ENCODE measurements at regions of chr14 and their contacts with region 1.

Region 1: DNA sequence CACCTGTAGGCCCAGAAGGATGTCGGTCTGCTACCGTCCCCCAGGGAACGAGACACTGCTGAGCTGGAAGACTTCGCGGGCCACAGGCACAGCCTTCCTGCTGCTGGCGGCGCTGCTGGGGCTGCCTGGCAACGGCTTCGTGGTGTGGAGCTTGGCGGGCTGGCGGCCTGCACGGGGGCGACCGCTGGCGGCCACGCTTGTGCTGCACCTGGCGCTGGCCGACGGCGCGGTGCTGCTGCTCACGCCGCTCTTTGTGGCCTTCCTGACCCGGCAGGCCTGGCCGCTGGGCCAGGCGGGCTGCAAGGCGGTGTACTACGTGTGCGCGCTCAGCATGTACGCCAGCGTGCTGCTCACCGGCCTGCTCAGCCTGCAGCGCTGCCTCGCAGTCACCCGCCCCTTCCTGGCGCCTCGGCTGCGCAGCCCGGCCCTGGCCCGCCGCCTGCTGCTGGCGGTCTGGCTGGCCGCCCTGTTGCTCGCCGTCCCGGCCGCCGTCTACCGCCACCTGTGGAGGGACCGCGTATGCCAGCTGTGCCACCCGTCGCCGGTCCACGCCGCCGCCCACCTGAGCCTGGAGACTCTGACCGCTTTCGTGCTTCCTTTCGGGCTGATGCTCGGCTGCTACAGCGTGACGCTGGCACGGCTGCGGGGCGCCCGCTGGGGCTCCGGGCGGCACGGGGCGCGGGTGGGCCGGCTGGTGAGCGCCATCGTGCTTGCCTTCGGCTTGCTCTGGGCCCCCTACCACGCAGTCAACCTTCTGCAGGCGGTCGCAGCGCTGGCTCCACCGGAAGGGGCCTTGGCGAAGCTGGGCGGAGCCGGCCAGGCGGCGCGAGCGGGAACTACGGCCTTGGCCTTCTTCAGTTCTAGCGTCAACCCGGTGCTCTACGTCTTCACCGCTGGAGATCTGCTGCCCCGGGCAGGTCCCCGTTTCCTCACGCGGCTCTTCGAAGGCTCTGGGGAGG is at the start of gene LTB4R:
- DNase-seq: peak; percentile 65
- CTCF ChIP-seq: peak; percentile 58

Region 2: DNA sequence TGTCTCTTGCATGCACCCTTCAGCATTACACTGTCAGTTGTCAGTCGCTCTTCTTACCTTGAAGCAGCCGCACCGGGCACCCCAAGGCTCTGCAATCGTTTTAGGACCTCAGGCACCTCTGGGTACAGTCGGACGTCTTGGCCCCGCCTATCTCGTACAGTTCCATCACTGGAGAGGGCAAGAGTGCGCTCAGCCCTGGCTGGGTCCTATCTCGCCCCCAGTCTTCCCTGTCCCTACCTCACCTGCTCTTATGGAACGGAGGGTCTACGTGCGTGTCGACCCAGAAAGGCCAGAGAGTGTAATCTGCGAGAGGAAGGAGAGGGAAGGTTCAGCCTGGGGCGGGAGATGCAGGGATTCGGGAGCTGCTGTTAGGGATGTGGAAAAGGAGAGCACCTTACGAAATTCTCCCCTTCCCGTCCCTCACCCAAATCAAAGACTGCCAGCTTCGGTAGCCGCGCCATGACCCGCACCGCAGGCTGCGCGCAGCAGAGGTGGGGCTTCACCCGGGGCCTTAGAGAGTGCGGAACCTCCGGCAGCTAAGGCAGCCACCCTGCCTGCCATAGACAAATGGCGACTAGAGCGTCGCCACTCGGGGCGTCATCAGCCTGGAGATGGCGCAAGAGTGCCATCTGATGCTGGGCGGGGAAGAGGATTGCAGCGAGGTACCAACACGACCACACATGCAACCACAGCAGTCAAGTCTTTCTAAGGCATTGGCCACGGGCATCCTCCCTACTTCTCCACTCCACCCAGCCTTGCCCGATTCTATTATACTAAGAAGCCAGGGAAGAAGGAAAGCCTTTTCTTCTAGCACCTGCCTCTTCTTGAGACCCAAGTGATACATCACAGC is 95.2 kb before region 1 on chr14 and contains the start of gene MDP1:
- CTCF ChIA-PET with region 1: interaction called, 42 read pairs
- POLR2A ChIA-PET with region 1: no interaction called
- DNase-seq: peak; percentile 91
- CTCF ChIP-seq: peak; percentile 97

Region 3: DNA sequence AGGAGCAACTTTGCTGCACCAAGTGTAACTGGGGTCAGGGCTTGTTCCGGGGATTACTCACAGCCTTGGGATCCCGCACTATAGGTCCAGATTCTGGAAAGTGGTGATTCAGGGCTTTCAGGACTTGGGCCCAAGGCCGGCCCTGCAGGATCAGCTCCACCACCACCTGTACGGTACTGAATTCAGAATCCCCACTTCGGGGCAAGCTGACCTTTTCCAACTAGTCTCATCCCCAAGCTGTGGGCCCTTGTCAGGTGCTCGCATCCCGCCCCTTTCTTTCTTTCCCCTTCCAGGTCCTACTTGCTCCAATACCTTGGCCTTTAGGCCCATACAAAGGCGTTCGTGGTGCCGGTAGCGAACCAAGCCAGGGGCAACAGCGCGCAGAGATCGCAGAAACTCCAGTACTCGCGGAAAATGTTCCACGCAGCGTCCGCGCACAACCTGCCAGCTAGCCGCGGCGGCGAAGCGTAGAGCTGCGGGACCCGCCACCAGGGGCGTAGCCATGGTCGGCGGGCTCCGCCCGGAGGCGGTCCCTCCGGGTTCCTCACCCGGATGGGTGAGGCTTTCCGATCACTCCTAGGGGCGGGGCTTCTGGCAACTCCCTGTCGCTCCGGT is 69.0 kb before region 1 on chr14:
- CTCF ChIA-PET with region 1: interaction called, 155 read pairs
- POLR2A ChIA-PET with region 1: interaction called, 5 read pairs
- DNase-seq: peak; percentile 97
- CTCF ChIP-seq: peak; percentile 11

Region 4: DNA sequence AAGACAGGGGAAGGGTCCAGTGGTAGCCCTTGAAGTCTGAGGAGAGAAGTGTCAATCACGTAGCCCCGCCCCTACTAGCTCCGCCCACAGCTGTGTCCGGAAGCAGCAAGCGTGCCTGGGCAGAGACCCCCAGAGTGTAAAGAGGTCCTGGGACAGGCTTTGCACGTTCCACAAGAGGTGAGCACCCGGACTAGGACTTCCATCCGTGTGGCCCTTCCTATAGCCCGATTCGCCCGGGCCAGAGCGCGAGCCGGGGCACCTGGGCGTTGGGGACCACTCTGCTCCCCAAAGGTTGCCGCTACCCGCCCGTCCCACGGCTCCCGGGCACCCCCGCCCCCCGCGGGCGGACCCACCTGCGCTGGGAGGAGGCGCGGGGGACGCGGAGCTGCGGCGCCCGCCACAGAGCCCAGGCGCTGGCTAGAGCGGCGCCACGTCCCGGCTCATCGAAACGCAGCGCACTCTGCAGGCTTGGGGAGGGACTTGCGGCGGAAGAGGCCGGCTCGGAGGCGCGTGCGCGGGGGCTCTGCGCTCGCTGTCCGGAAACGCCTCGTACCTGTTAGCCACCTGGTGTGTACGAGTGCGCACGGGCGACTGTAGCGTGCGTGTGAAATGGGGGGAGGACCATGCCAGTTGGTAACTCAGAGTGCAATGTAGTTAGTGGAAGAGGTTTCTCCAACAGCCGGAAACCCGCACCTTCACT is 39.6 kb before region 1 on chr14 and contains the start of gene RABGGTA:
- CTCF ChIA-PET with region 1: interaction called, 67 read pairs
- POLR2A ChIA-PET with region 1: no interaction called
- DNase-seq: peak; percentile 96
- CTCF ChIP-seq: peak; percentile 88

Region 5: DNA sequence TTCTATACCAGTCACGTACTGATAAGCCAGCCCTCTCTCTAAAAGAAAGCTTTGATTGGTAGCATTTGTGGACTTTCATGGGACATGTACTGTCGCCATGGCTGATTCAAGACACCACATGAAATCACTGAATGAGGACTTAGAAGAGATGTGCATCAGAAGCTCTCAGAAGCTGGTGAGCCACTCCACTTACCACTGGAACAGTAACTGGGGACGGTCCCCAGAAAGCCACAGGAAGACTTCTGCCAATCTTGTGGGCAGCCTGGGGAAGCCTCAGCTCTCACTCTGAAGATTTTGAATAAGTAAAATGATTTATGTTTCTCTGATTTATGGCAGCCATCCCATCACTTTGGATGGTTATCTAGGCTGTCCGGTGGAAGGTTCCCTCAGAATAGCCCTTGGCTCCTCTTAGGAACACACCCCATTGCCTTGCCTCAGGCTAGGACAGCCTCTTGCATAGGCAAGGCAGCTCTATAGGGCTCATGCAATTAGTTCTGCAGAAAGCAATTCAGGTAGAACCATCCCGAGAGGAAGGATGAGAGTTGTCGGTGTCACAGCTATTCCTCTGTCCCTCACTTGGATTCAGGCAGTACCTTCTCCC is 21.2 kb before region 1 on chr14:
- CTCF ChIA-PET with region 1: interaction called, 151 read pairs
- POLR2A ChIA-PET with region 1: no interaction called
- DNase-seq: peak; percentile 58
- CTCF ChIP-seq: no peak

Region 6: GRCh38 chr14:24321212-24321975 is 10.5 kb after region 1 on chr14:
- CTCF ChIA-PET with region 1: interaction called, 24 read pairs
- POLR2A ChIA-PET with region 1: interaction called, 3 read pairs
- DNase-seq: no peak
- CTCF ChIP-seq: no peak

Region 7: DNA sequence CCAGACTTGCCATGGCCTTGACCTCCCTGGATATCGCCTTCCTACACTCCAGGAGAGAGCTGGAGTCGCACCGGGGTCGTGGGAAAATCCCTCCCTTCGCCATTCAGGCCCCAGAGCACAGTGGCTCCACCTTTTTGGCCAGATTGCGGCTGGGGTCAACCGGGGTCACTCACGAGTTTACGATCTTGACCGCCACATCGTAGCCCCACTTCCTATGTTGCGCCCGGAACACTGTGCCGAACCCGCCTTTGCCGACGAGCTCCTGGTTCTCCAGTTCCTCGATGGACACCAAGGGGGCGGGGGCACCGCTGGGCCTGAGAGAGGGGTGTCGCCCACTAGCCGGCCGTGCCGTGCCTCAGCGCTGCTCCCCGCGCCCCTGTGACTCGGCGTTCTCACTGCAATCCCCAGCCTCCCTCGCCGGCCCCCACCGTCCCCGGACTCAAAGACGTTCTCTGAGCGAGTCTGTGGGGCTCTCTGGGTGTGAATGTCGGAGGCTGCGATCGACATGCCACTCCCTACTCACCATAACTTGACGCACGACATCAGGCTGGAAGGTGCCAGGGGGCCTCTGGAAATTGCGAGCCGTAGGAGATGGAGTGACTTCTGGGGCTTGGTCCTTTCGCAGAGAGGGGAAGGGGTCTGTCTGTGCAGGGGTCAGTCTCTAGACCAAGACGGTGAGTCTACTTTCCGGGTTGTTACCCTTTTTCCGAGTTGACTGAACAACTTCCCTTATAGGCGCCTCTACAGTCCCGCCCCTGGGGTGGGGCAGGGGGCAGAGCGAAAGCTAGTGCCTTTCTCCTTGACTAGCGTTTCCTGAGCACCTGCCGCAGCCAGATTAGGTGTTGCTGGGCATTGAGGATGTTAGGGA is 28.6 kb after region 1 on chr14 and contains the start of gene RIPK3:
- CTCF ChIA-PET with region 1: interaction called, 72 read pairs
- POLR2A ChIA-PET with region 1: no interaction called
- DNase-seq: peak; percentile 84
- CTCF ChIP-seq: no peak

Region 8: DNA sequence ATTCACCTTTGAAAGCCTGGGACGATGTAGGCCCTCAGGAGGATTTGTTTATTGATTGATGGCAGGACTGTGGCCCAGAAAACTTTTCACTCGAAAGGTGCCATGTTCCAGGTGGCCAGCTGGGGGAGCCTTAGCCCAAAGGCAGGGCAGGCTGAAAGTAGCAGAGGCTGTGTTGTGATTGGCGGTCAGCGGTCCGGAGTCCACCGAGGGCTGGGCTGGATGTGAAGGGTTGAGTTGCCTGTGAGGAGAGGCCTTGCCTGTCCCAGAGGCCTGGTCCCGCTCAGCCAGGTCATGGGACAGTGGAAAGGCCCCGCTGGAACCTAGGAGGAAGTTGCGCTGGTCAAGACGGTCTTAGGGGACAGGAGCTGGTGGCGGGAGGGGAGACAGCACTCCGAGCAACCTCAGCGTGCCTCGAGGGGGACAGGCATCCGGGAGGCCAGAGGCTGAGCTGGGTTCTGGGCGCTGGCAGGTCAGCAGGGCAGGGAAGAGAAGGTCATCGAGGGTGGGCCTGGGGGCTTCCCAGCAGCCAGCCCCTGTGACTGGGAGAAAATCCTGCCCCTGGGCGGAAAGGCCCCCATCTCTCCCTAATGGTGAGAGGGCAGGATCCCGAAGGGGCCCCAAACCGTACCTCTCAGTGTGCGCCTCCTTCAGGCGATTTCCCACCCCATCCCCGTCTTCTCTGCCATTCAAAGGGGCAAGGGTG is 170.8 kb after region 1 on chr14:
- CTCF ChIA-PET with region 1: no interaction called
- POLR2A ChIA-PET with region 1: no interaction called
- DNase-seq: peak; percentile 84
- CTCF ChIP-seq: peak; percentile 69